T-cell (primary cell): ENCODE measurements at regions of chr1 and their contacts with region 1.

Region 1: GRCh38 chr1:113887402-113888175 is at the start of gene BCL2L15:
- DNase-seq: no peak
- ATAC-seq: peak in 1 of 4 experiments; percentile 33
- H3K4me3 ChIP-seq: no peak within 1 kb of the TSS
- H3K4me3 Mint-ChIP-seq: peak within 1 kb of the TSS in 1 of 3 donors; percentile 74
- H3K27ac ChIP-seq: no peak within 1 kb of the TSS
- H3K27ac Mint-ChIP-seq: peak within 1 kb of the TSS; percentile 44 to 76
- H3K4me1 ChIP-seq: peaks cover 2 to 6% of the 10 kb centered on the region in 2 experiments
- H3K4me1 Mint-ChIP-seq: peaks cover 16 to 37% (median 21%) of the 10 kb centered on the region in 3 donors
- H3K27me3 ChIP-seq: no peaks in the 10 kb centered on the region
- H3K27me3 Mint-ChIP-seq: no peaks in the 10 kb centered on the region
- total RNA-seq, gene BCL2L15: 1.2 to 5.8 (median 1.7) TPM

Region 2: GRCh38 chr1:113742515-113742914 is 145.1 kb before region 1 on chr1:
- CTCF ChIA-PET with region 1: no interaction called
- POLR2A ChIA-PET with region 1: no interaction called
- DNase-seq: no peak
- ATAC-seq: no peak
- H3K4me3 ChIP-seq: no peak overlapping the region
- H3K4me3 Mint-ChIP-seq: no peak overlapping the region
- H3K27ac ChIP-seq: no peak overlapping the region
- H3K27ac Mint-ChIP-seq: peak overlapping the region in 1 of 2 donors; percentile 61
- H3K4me1 ChIP-seq: no peaks in the 10 kb centered on the region
- H3K4me1 Mint-ChIP-seq: peaks cover 5 to 9% (median 6%) of the 10 kb centered on the region in 3 donors
- H3K27me3 ChIP-seq: no peaks in the 10 kb centered on the region
- H3K27me3 Mint-ChIP-seq: no peaks in the 10 kb centered on the region

Region 3: DNA sequence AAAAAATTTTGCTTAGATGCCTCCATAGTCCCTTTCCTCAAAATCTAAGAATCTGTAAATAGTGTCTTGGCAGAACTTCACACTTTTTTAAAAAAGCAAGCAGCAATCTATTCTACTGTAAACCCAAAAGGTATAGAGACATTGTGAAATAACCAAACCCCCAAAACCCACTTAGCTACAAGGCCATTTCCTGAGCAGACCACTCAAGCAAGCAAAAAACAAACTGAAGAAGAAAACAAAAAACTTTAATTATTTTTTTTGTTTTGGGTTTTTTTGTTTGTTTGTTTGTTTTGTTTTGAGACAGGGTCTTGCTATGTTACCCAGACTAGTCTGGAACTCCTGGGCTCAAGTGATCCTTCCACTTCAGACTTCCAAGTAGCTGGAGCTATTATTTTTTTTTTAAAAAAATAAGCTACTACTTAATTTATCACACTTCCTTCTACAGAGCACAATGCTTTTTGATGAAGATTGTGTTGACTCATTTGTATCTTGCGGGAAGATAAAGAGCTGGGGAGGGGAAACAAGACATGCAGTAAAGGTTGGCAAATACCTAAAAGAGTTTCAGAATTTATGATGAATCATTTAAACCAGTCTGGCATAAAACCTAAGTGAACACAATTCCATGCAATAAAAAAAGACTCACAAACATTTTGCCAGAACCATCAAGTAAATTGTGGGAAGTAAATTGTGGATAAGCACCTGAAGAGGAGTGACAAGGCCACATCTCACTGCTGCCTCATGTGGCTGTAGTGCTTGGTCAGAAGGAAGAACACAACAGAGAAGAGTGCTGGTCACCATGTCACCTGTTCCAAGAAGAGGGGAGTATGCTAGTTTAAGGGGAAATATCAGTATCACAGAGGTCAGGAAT is 13.3 kb before region 1 on chr1:
- CTCF ChIA-PET with region 1: interaction called, 3 to 5 read pairs
- POLR2A ChIA-PET with region 1: interaction called, 6 to 12 read pairs
- DNase-seq: peak in 3 of 35 experiments; percentile 4 to 40 (median 8)
- ATAC-seq: peak in 3 of 4 experiments; percentile 47 to 54 (median 50)
- H3K4me3 ChIP-seq: no peak overlapping the region
- H3K4me3 Mint-ChIP-seq: peak overlapping the region in 2 of 3 donors; percentile 11 to 41
- H3K27ac ChIP-seq: peak overlapping the region; percentile 42
- H3K27ac Mint-ChIP-seq: peak overlapping the region; percentile 79 to 89
- H3K4me1 ChIP-seq: peaks cover 35 to 36% of the 10 kb centered on the region in 2 experiments
- H3K4me1 Mint-ChIP-seq: peaks cover 67 to 81% (median 71%) of the 10 kb centered on the region in 3 donors
- H3K27me3 ChIP-seq: no peaks in the 10 kb centered on the region
- H3K27me3 Mint-ChIP-seq: no peaks in the 10 kb centered on the region

Region 4: GRCh38 chr1:114803001-114803400 is 915.4 kb after region 1 on chr1:
- CTCF ChIA-PET with region 1: no interaction called
- POLR2A ChIA-PET with region 1: no interaction called
- DNase-seq: no peak
- ATAC-seq: no peak
- H3K4me3 ChIP-seq: no peak overlapping the region
- H3K4me3 Mint-ChIP-seq: no peak overlapping the region
- H3K27ac ChIP-seq: no peak overlapping the region
- H3K27ac Mint-ChIP-seq: no peak overlapping the region
- H3K4me1 ChIP-seq: no peaks in the 10 kb centered on the region
- H3K4me1 Mint-ChIP-seq: no peaks in the 10 kb centered on the region
- H3K27me3 ChIP-seq: peaks cover 0 to 2% of the 10 kb centered on the region in 2 experiments
- H3K27me3 Mint-ChIP-seq: peaks cover 10 to 21% of the 10 kb centered on the region in 2 donors

Region 5: GRCh38 chr1:114854693-114855320 is 967.2 kb after region 1 on chr1 and contains the start of gene SYCP1:
- CTCF ChIA-PET with region 1: no interaction called
- POLR2A ChIA-PET with region 1: no interaction called
- DNase-seq: no peak
- ATAC-seq: no peak
- H3K4me3 ChIP-seq: peak within 1 kb of the TSS in 1 of 2 donors; percentile 57
- H3K4me3 Mint-ChIP-seq: peak within 1 kb of the TSS; percentile 55 to 74 (median 59)
- H3K27ac ChIP-seq: no peak within 1 kb of the TSS
- H3K27ac Mint-ChIP-seq: peak within 1 kb of the TSS in 1 of 2 donors; percentile 9
- H3K4me1 ChIP-seq: peaks cover 0 to 7% of the 10 kb centered on the region in 2 experiments
- H3K4me1 Mint-ChIP-seq: peaks cover 10 to 13% (median 10%) of the 10 kb centered on the region in 3 donors
- H3K27me3 ChIP-seq: peaks cover 10 to 38% of the 10 kb centered on the region in 2 experiments
- H3K27me3 Mint-ChIP-seq: peaks cover 30 to 41% of the 10 kb centered on the region in 2 donors
- total RNA-seq, gene SYCP1: not detected